ENCODE measurements at regions of chr12 and their contacts with region 1.

Region 1: GRCh38 chr12:22709292-22709691 is 84.3 kb downstream of the ETNK1 start:
- DNase-seq: no peak
- H3K4me3 ChIP-seq: no peak overlapping the region
- H3K27ac ChIP-seq: no peak overlapping the region
- H3K4me1 ChIP-seq: no peaks in the 10 kb centered on the region
- H3K27me3 ChIP-seq: no peaks in the 10 kb centered on the region
- CTCF ChIP-seq: peak; percentile 21 to 59 (median 34)
- EP300 ChIP-seq: no peak
- POLR2A ChIP-seq: no peak

Region 2: DNA sequence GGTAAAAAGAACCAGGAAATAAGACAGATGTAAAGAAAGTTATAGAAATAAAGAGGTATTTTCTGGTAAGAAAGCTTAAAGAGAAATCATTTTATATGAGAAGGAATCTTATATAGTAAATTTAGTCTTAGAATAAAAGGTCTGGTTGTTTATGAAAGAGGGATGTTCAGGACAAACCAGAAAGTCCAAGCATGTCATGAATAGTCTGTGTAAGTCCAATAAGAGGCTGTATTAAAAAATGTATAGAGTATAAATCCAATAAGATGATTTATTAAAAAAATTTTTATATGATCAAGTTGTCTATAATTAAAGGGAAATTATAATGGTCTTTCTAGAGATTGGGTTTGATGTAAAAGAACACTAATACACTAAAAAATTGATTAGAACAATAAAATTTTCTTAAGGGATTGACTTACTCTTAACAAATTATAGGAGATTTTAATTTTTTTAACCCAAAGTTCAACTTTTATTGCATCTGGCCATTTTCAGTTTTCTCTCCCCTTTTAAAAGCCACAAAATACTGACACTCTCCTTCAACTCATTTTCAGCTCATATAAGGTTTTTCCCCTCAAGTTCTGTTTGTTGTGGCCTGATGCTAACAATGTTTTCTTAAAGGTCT is 409.9 kb before region 1 on chr12:
- intact Hi-C with region 1: no loop called
- DNase-seq: no peak
- H3K4me3 ChIP-seq: no peak overlapping the region
- H3K27ac ChIP-seq: peak overlapping the region in 3 of 4 donors; percentile 45 to 62 (median 61)
- H3K4me1 ChIP-seq: peaks cover 0 to 48% (median 35%) of the 10 kb centered on the region in 4 donors
- H3K27me3 ChIP-seq: no peaks in the 10 kb centered on the region
- CTCF ChIP-seq: no peak
- EP300 ChIP-seq: no peak
- POLR2A ChIP-seq: no peak

Region 3: DNA sequence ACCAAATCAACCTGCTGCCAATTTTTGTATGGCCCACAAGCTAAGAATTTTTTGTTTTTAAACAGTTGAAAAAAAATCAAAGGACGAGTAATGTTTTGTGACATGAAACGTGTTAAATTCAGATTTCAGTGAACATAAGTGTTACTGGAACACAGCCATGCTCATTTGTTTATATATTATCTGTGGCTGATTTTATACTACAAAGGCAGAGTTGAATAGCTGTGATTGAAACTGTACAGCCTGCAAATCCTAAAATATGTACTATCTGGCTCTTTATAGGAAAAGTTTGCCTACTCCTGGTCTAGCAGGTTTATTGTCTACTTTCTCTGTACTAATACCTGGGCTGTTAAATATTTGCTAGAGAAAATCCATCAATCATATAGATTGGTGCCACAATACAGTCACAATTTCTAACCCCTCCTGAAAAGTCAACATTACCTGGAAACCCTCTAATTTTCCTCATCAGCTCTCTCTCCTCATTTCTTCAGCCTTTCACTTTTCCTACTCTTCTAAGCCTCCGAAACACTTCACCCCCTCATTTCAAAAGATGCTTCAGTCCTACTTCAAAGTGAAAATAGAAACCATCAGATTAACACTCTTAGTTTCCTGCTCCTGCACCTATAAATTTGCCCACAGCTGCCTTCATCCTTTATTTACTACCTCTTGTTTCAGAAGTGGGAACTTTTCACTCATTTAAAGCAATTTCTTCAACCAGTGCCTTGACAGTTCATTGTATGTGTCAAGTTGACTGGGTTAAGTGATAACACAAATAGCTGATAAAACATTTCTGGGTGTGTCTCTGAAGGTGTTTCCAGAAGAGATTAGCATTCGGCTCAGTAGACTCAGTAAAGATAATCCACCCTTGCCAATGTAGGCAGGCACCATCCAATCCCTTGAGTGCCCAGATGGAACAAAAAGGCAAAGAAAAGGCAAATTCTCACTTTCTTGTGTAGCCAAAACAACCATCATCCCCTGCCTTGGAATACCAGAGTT is 147.0 kb before region 1 on chr12:
- intact Hi-C with region 1: no loop called
- DNase-seq: no peak
- H3K4me3 ChIP-seq: no peak overlapping the region
- H3K27ac ChIP-seq: no peak overlapping the region
- H3K4me1 ChIP-seq: no peaks in the 10 kb centered on the region
- H3K27me3 ChIP-seq: no peaks in the 10 kb centered on the region
- CTCF ChIP-seq: no peak
- EP300 ChIP-seq: no peak
- POLR2A ChIP-seq: no peak

Region 4: GRCh38 chr12:22856178-22856577 is 146.9 kb after region 1 on chr12:
- intact Hi-C with region 1: loop called (anchors 10 kb)
- DNase-seq: no peak
- H3K4me3 ChIP-seq: no peak overlapping the region
- H3K27ac ChIP-seq: no peak overlapping the region
- H3K4me1 ChIP-seq: no peaks in the 10 kb centered on the region
- H3K27me3 ChIP-seq: no peaks in the 10 kb centered on the region
- CTCF ChIP-seq: peak in 3 of 4 experiments; percentile 20 to 45 (median 41)
- EP300 ChIP-seq: no peak
- POLR2A ChIP-seq: no peak